Activated CD8-positive, alpha-beta memory T cell treated with anti-CD3 and anti-CD28 coated beads, Interleukin-2, amount 10 ng/mL, durations not matched to agents 7 days and 5 days (primary cell): ENCODE measurements at regions of chr9 and their contacts with region 1.

Region 1: DNA sequence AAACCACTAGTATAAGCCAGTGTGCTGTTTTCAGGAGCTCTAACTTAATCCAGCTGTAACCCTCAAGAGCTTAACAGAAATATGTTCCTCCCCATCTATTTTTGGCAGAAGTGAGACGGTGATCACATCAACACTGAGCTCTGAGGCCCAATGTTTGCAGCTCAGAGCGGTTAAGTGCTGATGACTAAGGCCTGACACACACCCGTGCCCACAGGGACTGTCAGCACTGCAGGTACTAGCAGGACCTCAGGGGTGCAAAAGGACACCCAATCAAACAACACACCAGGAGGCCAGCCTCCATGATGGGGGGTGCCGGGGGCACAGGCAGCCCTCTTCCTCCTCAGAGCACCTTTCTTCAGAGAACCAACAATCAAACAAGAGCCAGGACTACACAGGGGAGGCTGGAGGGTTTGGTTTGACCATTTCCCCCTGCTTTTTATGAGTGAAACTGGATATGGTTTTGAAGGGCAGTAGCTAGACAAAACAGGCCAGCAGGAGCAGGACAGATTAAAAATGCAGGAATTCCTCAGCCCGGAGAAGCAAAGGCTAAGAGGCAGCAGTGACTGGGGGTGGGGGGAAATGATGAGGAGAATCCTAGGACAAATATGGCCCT is 61.3 kb downstream of the RAPGEF1 start:
- DNase-seq: peak; percentile 95
- ATAC-seq: peak; percentile 95
- H3K4me3 Mint-ChIP-seq: peak overlapping the region; percentile 80
- H3K27ac Mint-ChIP-seq: peak overlapping the region; percentile 99
- H3K4me1 Mint-ChIP-seq: peaks cover 77% of the 10 kb centered on the region
- H3K27me3 Mint-ChIP-seq: no peaks in the 10 kb centered on the region

Region 2: DNA sequence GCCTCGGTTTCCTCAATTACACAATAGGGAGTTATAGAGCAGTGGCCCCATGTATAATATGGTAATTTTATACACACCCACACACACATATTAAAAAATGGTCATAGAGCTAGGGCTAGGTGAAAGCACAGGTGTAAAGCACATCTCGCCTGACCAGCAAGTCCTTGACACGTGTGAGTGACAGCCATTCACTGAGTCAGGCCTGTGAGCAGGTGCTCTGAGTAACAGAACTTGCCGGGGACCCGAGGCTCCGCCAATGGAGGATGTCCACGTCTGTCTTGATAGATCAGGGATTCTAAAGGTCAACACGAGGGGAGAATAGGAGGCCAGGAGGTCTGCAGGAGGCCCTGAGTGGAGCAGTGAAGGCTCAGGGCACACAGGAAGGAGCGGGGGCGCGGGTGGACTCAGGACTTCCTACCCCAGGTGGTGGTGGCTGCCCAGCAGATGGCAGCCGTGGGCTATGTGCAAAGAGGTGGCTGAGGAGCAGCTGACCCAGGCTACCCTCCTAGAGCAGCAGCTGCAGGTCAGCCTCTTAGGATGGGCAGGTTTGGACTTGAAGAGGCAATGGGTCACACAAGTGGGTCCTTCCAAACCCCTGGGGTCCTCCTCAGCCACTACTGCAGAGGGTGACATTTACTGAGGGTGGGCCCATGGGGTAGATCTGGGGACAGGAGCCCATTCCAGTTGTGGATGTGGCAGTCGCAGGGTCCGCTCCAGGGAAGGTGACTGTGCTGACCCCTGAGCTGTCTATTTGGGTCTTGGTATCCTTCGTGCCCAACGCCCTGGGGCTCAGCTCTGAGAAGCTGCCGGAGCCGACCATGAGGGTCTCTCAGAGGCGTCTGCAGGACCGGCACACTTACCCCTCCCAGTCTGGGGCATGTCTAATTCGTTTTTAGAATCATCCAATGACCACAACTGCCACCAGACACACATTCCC is 87.4 kb before region 1 on chr9:
- CTCF ChIA-PET with region 1: interaction called, 18 read pairs
- DNase-seq: peak; percentile 85
- ATAC-seq: peak; percentile 89
- H3K4me3 Mint-ChIP-seq: no peak overlapping the region
- H3K27ac Mint-ChIP-seq: peak overlapping the region; percentile 85
- H3K4me1 Mint-ChIP-seq: peaks cover 44% of the 10 kb centered on the region
- H3K27me3 Mint-ChIP-seq: no peaks in the 10 kb centered on the region

Region 3: DNA sequence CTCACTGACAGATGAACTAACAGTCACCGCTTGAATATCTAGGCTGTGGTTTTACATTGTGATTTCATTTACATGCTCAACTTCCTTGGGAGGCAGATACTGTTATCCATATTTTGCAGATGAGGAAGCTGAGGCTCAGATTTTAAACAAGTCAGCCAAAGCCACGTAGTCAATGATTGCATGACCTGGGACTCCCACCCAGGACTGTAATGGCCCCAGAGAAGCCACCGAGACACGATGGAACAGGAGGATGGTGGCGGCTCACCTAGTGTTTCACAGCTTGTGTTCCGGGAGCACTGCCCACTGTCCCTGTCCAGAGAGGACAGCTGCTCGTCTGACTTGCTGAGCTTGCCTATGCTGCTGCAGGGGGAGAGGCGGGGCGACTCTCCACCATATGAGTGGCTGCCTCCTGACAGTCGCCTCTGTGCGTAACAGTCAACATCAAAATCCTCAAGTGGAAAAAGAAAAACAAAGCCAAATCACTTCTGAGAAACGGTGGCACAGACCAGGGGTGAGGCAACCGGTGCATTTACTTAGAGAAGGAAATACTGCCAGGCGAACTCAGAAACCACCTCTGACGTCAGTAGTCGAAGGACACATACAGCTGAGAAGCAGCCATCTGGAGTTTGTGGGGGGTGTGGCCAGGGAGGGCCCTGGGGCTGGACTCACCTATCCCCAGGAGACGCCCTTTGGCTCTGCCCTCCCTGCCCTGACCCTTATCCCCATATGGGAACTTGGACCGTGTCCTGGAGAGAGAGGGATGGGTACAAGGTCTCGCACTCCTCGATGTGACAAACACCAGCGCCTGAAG is 50.8 kb before region 1 on chr9:
- CTCF ChIA-PET with region 1: interaction called, 19 read pairs
- DNase-seq: peak; percentile 93
- ATAC-seq: peak; percentile 84
- H3K4me3 Mint-ChIP-seq: peak overlapping the region; percentile 53
- H3K27ac Mint-ChIP-seq: peak overlapping the region; percentile 91
- H3K4me1 Mint-ChIP-seq: peaks cover 82% of the 10 kb centered on the region
- H3K27me3 Mint-ChIP-seq: no peaks in the 10 kb centered on the region

Region 4: DNA sequence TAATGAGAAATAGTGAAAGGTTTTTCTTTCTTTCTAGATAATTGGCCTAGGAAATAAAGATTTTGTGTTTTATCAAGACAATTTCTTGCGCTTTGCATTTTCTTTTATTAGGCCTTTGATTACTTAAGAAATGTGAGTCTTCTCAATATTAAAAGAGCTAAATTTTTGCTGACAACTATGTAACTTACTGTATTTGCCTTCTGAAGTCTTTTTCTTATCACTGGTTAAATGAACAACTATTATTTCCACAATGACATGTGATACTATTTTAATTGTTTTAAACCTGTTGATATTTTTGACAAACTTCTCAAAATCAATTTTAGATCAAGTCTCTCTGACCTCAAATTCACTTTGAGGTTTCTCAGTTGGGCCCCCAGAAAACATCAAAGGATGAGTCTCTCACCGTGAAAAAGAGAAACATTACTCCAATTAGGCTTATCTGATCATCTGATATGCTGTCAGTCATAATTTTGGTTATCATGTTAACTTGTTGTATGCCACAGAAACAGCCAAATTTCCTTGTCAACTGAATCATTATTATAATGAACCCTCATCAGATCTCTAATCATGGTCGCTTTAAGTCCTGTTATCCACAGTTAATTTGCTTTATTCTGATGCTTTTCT is 12.5 kb after region 1 on chr9:
- CTCF ChIA-PET with region 1: interaction called, 11 read pairs
- DNase-seq: no peak
- ATAC-seq: peak; percentile 71
- H3K4me3 Mint-ChIP-seq: no peak overlapping the region
- H3K27ac Mint-ChIP-seq: peak overlapping the region; percentile 70
- H3K4me1 Mint-ChIP-seq: peaks cover 83% of the 10 kb centered on the region
- H3K27me3 Mint-ChIP-seq: no peaks in the 10 kb centered on the region

Region 5: DNA sequence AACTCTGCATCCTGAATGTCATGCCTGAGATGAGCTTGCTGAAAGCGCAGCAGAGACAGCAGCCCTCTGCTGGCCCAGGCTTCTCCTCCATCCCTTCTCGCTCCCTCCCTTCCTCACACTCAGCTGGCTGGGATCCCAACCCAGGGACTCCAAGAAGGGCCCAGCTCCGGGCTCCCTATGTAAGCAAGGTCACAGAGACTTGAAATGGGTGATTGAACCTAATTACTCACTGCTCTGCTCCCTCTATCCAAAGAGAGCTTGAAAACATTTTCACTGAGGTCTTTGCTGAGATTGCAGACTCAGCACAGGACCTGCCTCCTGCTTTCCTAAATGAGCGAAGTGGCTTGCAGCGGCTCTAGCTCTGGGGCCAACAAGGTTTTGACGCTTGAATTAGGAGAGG is 18.5 kb after region 1 on chr9:
- CTCF ChIA-PET with region 1: interaction called, 10 read pairs
- DNase-seq: no peak
- ATAC-seq: no peak
- H3K4me3 Mint-ChIP-seq: no peak overlapping the region
- H3K27ac Mint-ChIP-seq: no peak overlapping the region
- H3K4me1 Mint-ChIP-seq: peaks cover 66% of the 10 kb centered on the region
- H3K27me3 Mint-ChIP-seq: no peaks in the 10 kb centered on the region

Region 6: GRCh38 chr9:131709771-131710454 is 31.3 kb after region 1 on chr9:
- CTCF ChIA-PET with region 1: interaction called, 10 read pairs
- DNase-seq: peak; percentile 67
- ATAC-seq: peak; percentile 82
- H3K4me3 Mint-ChIP-seq: peak overlapping the region; percentile 54
- H3K27ac Mint-ChIP-seq: peak overlapping the region; percentile 90
- H3K4me1 Mint-ChIP-seq: peaks cover 82% of the 10 kb centered on the region
- H3K27me3 Mint-ChIP-seq: no peaks in the 10 kb centered on the region